Breast epithelium (tissue), 4 donors: ENCODE measurements at regions of chrX and their contacts with region 1.

Region 1: DNA sequence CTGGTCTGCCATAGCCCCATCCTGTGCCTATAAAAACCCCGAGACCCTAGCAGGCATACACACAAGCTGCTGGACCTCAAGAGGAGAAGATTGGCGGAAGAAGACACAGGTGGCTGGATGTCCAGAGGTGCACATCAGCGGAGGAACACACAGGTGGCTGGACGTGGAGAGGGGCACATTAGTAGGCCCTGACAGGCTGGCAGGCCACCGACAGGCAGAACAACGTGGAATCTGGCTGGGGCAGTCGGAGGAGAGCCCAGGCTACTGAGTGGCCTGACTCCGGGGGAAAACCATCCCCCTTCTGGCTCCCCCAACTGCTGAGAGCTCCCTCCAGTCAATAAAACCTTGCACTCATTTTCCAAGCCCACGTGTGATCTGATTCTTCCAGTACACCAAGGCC is 512.5 kb upstream of the AMOT start:
- DNase-seq: no peak
- H3K4me3 ChIP-seq: no peak overlapping the region
- H3K27ac ChIP-seq: no peak overlapping the region
- H3K4me1 ChIP-seq: no peaks in the 10 kb centered on the region
- H3K27me3 ChIP-seq: peaks cover 0 to 8% of the 10 kb centered on the region in 2 donors
- CTCF ChIP-seq: no peak
- POLR2A ChIP-seq: no peak

Region 2: DNA sequence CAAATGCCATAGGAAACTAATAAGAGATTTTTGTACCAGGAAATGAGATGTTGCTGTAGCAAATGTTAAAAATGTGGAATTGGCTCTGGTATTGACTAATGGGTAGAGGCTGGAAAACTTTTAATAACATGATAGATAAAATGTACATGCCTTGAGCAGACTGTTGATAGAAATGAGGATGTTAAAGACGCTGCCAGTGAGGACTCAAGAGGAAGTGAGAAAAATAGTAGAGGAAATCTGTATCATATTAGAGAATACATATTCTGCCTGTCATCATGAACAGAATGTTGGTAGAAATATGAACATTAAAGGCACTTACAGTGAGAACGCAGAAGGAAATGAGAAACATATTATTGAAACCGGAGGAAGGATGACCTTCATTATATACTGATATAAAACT is 653.5 kb after region 1 on chrX:
- intact Hi-C with region 1: loop called (anchors 5 kb)
- DNase-seq: no peak
- H3K4me3 ChIP-seq: no peak overlapping the region
- H3K27ac ChIP-seq: no peak overlapping the region
- H3K4me1 ChIP-seq: no peaks in the 10 kb centered on the region
- H3K27me3 ChIP-seq: peaks cover 0 to 16% of the 10 kb centered on the region in 2 donors
- CTCF ChIP-seq: no peak
- POLR2A ChIP-seq: no peak